Activated CD8-positive, alpha-beta T cell treated with anti-CD3 and anti-CD28 coated beads for 36 hours (primary cell): ENCODE measurements at regions of chr15 and their contacts with region 1.

Region 1: GRCh38 chr15:78811124-78811824 is at the start of gene ADAMTS7:
- DNase-seq: peak; percentile 55
- ATAC-seq: peak; percentile 80
- H3K4me3 Mint-ChIP-seq: peak within 1 kb of the TSS; percentile 66
- H3K27ac Mint-ChIP-seq: no peak within 1 kb of the TSS
- H3K4me1 Mint-ChIP-seq: peaks cover 6% of the 10 kb centered on the region
- H3K27me3 Mint-ChIP-seq: peaks cover 39% of the 10 kb centered on the region
- CTCF ChIP-seq: peak; percentile 78
- total RNA-seq, gene ADAMTS7: 0.23 to 0.60 TPM

Region 2: GRCh38 chr15:78767331-78767951 is 43.8 kb before region 1 on chr15:
- CTCF ChIA-PET with region 1: no interaction called
- POLR2A ChIA-PET with region 1: no interaction called
- intact Hi-C with region 1: loop called (anchors 10 kb)
- DNase-seq: no peak
- ATAC-seq: no peak
- H3K4me3 Mint-ChIP-seq: no peak overlapping the region
- H3K27ac Mint-ChIP-seq: no peak overlapping the region
- H3K4me1 Mint-ChIP-seq: peaks cover 3% of the 10 kb centered on the region
- H3K27me3 Mint-ChIP-seq: no peaks in the 10 kb centered on the region
- CTCF ChIP-seq: no peak

Region 3: GRCh38 chr15:78795670-78796069 is 15.6 kb before region 1 on chr15:
- CTCF ChIA-PET with region 1: interaction called, 12 read pairs
- POLR2A ChIA-PET with region 1: no interaction called
- intact Hi-C with region 1: no loop called
- DNase-seq: no peak
- ATAC-seq: no peak
- H3K4me3 Mint-ChIP-seq: no peak overlapping the region
- H3K27ac Mint-ChIP-seq: no peak overlapping the region
- H3K4me1 Mint-ChIP-seq: no peaks in the 10 kb centered on the region
- H3K27me3 Mint-ChIP-seq: no peaks in the 10 kb centered on the region
- CTCF ChIP-seq: no peak